Activated B cell treated with CpG ODN at 0.5 μM for 24 hours (primary cell): ENCODE measurements at regions of chr10 and their contacts with region 1.

Region 1: DNA sequence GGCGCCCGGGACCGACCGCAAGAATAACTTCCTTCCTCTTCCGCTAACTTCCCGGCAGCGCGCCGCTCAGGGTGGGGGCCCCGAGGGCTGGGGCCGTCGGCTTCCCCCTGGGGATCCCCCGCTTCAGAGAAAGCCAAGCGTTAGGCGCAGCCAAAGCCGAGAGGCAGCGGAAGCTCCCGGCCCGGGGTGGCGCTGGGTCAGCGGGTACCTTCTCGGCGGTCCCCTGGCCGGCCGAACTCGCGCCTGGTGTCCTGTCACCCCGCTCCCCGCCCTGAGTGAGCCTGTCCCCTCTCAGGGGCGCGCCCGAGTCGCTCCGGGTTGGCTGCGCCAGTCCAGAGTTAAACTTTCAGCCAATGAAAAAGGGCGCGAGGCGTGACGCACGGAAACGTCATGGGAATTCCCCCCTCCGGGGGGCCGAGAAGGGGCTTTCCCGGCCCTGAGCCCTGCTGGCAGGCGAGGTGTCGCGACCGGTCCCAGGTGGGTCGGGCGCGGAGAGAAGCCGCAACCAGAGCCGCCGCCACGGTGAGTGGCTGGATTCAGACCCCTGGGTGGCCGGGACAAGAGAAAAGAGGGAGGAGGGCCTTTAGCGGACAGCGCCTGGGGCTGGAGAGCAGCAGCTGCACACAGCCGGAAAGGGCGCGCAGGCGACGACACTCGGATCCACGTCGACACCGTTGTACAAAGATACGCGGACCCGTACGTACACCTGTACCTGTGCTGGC is 1.3 kb upstream of the NFKB2 start:
- DNase-seq: peak; percentile 99
- ATAC-seq: peak; percentile 79
- H3K4me3 Mint-ChIP-seq: peak overlapping the region; percentile 94
- H3K27ac Mint-ChIP-seq: peak overlapping the region; percentile 97
- H3K4me1 Mint-ChIP-seq: peaks cover 46% of the 10 kb centered on the region
- H3K27me3 Mint-ChIP-seq: no peaks in the 10 kb centered on the region
- CTCF ChIP-seq: no peak

Region 2: DNA sequence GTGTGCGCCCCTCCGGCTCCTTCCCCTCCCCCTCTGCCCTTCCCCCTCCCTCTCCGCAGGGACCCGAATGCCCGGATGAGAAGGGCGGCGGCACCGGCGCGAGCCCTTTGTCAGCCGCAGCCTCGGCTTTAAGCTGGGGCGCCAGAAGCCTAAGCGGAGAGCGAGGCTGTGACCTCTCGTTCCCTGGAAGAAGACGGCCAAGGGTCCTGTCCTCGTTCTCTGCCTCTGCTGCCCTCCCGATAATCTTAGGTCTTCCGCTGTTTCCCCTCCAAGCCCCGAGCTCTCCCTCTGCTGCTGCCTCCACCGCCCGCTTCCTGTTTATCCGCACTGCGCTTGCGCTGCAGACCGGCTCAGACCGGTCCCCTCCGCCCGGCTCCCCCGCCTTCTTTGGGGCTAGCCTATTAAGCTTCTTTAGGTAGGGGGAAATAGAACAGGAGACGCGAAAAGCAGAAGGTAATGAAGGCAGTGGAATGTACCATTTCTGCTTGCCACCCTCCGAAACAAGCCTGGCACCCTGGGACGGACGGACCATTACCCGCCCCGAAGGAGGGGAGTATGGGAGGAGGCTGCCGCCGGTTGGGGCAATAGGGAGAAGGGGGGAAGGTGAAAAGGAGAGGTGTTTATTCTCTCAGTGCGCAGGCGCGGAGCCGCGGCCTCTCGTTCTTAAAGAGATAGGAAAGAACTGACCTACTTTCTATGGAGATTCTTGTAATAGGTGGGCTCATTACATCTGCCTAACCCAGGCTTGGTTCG is 575.9 kb before region 1 on chr10 and contains the start of gene OGA:
- CTCF ChIA-PET with region 1: no interaction called
- POLR2A ChIA-PET with region 1: interaction called, 9 read pairs
- intact Hi-C with region 1: loop called (anchors 2 kb)
- DNase-seq: peak; percentile 91
- ATAC-seq: peak; percentile 86
- H3K4me3 Mint-ChIP-seq: peak within 1 kb of the TSS; percentile 98
- H3K27ac Mint-ChIP-seq: peak within 1 kb of the TSS; percentile 99
- H3K4me1 Mint-ChIP-seq: peaks cover 42% of the 10 kb centered on the region
- H3K27me3 Mint-ChIP-seq: no peaks in the 10 kb centered on the region
- CTCF ChIP-seq: no peak
- total RNA-seq, gene OGA: 209 and 271 TPM in 2 replicates

Region 3: DNA sequence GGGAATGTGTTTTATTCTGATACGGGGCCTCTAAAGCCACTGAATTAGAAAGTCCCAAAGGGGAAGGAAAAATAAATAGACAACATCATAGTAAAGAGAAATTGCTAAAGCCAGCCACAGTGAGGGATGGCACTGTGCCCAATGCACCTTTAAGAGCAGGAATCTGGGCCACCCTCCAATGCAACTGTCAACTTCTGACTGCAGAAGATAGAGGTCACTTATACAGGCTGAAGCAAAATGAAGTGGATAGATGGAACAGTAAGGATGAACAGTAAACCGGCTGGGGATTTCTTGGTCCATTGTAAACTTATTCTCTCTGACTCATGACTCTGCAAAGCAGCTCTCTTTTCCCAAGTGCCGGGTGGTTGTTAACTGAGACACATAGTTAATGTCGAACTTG is 496.6 kb before region 1 on chr10:
- CTCF ChIA-PET with region 1: no interaction called
- POLR2A ChIA-PET with region 1: no interaction called
- intact Hi-C with region 1: no loop called
- DNase-seq: no peak
- ATAC-seq: no peak
- H3K4me3 Mint-ChIP-seq: no peak overlapping the region
- H3K27ac Mint-ChIP-seq: peak overlapping the region; percentile 35
- H3K4me1 Mint-ChIP-seq: peaks cover 80% of the 10 kb centered on the region
- H3K27me3 Mint-ChIP-seq: no peaks in the 10 kb centered on the region
- CTCF ChIP-seq: no peak

Region 4: DNA sequence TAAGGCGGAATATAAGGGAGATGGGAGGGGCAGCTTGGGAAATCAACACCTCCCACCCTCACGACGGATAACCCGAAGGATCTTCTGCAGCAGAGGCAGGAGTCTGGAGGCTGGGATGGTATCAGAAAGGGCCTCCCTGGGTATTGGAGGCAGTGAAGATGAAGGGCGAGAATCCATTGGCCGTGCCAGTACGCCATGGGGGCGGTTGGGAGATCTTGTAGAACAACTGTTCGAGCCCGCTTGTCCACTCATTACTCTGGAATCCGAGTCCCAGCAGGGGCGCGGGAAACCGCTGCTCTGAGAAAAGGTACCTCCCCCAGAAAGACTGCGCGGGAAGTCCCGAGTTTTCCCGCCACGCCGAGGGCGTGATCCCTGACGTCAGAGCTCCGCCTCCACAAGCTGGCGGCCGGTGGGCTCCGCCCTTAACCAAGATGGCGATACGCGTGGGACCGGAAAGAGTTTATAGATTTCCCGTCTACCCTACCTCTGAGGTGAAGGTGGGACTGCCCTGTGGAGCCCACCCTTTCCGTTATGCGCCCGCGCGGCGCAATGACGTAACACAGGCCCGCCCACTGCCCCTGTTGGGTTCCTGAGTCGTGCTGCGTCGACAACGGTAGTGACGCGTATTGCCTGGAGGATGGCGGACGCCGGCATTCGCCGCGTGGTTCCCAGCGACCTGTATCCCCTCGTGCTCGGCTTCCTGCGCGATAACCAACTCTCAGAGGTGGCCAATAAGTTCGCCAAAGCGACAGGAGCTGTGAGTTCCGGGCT is 242.3 kb before region 1 on chr10 and contains the start of gene NOLC1:
- CTCF ChIA-PET with region 1: no interaction called
- POLR2A ChIA-PET with region 1: interaction called, 11 read pairs
- intact Hi-C with region 1: loop called (anchors 1 kb)
- DNase-seq: peak; percentile 99
- ATAC-seq: peak; percentile 96
- H3K4me3 Mint-ChIP-seq: peak within 1 kb of the TSS; percentile 97
- H3K27ac Mint-ChIP-seq: peak within 1 kb of the TSS; percentile 93
- H3K4me1 Mint-ChIP-seq: peaks cover 35% of the 10 kb centered on the region
- H3K27me3 Mint-ChIP-seq: no peaks in the 10 kb centered on the region
- CTCF ChIP-seq: no peak
- total RNA-seq, gene NOLC1: 95.1 and 106 TPM in 2 replicates

Region 5: GRCh38 chr10:102384053-102384452 is 10.2 kb before region 1 on chr10:
- CTCF ChIA-PET with region 1: interaction called, 19 read pairs
- POLR2A ChIA-PET with region 1: interaction called, 99 read pairs
- intact Hi-C with region 1: loop called (anchors 1 kb)
- DNase-seq: no peak
- ATAC-seq: peak; percentile 28
- H3K4me3 Mint-ChIP-seq: no peak overlapping the region
- H3K27ac Mint-ChIP-seq: peak overlapping the region; percentile 50
- H3K4me1 Mint-ChIP-seq: peaks cover 18% of the 10 kb centered on the region
- H3K27me3 Mint-ChIP-seq: no peaks in the 10 kb centered on the region
- CTCF ChIP-seq: no peak

Region 6: GRCh38 chr10:102432162-102432950 is 38.1 kb after region 1 on chr10 and contains the start of gene CUEDC2:
- CTCF ChIA-PET with region 1: no interaction called
- POLR2A ChIA-PET with region 1: interaction called, 52 read pairs
- intact Hi-C with region 1: loop called (anchors 1 kb)
- DNase-seq: peak; percentile 96
- ATAC-seq: peak; percentile 98
- H3K4me3 Mint-ChIP-seq: peak within 1 kb of the TSS; percentile 93
- H3K27ac Mint-ChIP-seq: peak within 1 kb of the TSS; percentile 75
- H3K4me1 Mint-ChIP-seq: peaks cover 45% of the 10 kb centered on the region
- H3K27me3 Mint-ChIP-seq: no peaks in the 10 kb centered on the region
- CTCF ChIP-seq: no peak
- total RNA-seq, gene CUEDC2: 43.7 and 46.0 TPM in 2 replicates

Region 7: GRCh38 chr10:102480396-102480795 is 86.2 kb after region 1 on chr10:
- CTCF ChIA-PET with region 1: interaction called, 13 read pairs
- POLR2A ChIA-PET with region 1: interaction called, 9 read pairs
- intact Hi-C with region 1: loop called (anchors 1 kb)
- DNase-seq: no peak
- ATAC-seq: no peak
- H3K4me3 Mint-ChIP-seq: no peak overlapping the region
- H3K27ac Mint-ChIP-seq: no peak overlapping the region
- H3K4me1 Mint-ChIP-seq: peaks cover 7% of the 10 kb centered on the region
- H3K27me3 Mint-ChIP-seq: no peaks in the 10 kb centered on the region
- CTCF ChIP-seq: no peak

Region 8: DNA sequence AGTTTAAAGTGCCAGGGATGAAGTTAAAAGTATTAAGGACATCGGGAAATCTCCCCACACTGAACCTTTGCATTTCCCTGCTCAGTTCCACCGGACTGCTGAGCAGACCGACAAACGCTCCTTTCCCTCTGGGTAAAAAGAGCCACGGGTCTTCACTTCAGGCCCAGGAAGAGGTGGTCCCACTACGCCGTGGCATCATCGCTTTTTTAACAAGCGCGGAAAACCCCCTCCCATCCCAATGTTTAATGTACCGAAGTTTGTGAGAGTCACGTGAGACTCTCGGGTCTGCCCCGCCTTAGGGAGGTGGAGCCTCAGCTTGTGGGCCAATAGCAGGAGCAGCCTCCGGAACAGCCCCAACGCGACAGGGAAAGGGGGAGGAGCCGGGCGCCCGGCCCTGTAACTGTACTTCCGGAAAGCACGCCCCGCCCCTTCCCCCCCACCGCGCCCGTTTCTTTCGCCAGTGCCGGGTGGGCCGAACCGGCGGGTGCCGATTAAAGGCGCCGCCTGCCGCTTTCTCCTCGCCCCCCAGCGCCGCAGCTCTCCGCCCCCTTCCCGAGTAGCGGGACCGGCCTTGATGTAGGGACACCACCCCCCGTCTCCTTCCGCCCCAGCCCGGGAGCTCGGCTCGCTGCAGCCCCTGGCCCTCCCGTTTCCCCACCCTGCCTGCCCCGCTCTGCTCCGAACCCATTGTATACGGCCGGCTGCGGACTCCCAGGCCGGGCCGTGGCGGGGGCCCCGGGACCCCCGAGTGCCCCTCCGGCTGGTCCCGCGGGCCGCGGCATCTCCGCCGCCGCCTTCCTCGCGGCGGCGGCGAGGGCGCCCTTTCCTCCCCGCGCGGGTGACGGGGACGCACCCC is 247.9 kb after region 1 on chr10:
- CTCF ChIA-PET with region 1: no interaction called
- POLR2A ChIA-PET with region 1: interaction called, 75 read pairs
- intact Hi-C with region 1: loop called (anchors 1 kb)
- DNase-seq: peak; percentile 88
- ATAC-seq: peak; percentile 65
- H3K4me3 Mint-ChIP-seq: peak overlapping the region; percentile 88
- H3K27ac Mint-ChIP-seq: peak overlapping the region; percentile 96
- H3K4me1 Mint-ChIP-seq: peaks cover 27% of the 10 kb centered on the region
- H3K27me3 Mint-ChIP-seq: no peaks in the 10 kb centered on the region
- CTCF ChIP-seq: no peak